Endothelial cell of umbilical vein (primary cell): ENCODE measurements at regions of chr5 and their contacts with region 1.

Region 1: DNA sequence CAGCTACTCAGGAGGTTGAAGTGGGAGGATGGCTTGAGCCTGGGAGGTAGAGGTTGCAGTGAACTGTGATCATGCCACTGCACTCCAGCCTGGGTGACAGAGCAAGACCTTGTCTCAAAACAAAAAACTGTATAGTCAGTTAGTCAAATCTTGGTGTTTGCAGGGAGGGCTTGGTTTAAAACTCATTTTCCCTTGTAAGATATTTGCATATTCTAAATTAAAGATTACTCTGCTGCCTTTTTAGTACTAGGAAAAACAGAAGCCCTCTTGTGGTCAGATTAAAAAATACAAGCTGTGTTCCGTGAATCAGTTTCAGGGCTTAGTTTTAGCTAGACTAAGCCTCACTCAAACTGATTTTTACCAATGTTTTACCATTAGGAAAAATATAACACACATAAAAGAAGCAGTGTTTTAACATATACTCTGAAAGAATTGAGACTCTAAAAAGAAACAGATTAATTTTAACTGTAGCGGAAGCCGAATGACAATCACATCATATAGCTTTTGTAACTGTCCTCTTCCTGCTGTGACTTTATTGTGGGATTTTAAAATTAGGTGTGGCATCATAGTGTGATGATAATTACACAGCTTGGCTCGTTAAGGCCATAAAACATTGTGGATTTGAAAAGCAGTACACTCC is 84.9 kb upstream of the BASP1 start:
- DNase-seq: peak; percentile 67
- H3K4me3 ChIP-seq: no peak overlapping the region
- H3K27ac ChIP-seq: no peak overlapping the region
- H3K4me1 ChIP-seq: peaks cover 23% of the 10 kb centered on the region
- H3K27me3 ChIP-seq: no peaks in the 10 kb centered on the region
- CTCF ChIP-seq: peak; percentile 26 to 27
- POLR2A ChIP-seq: no peak

Region 2: GRCh38 chr5:16934123-16934522 is 198.4 kb before region 1 on chr5:
- CTCF ChIA-PET with region 1: interaction called, 257 read pairs
- POLR2A ChIA-PET with region 1: interaction called, 7 read pairs
- dilution Hi-C with region 1: no loop called
- intact Hi-C with region 1: loop called (anchors 1 kb)
- DNase-seq: peak; percentile 86
- H3K4me3 ChIP-seq: peak overlapping the region; percentile 83 to 99 (median 97)
- H3K27ac ChIP-seq: peak overlapping the region; percentile 81
- H3K4me1 ChIP-seq: peaks cover 48% of the 10 kb centered on the region
- H3K27me3 ChIP-seq: no peaks in the 10 kb centered on the region
- CTCF ChIP-seq: peak; percentile 90 to 99
- POLR2A ChIP-seq: no peak

Region 3: GRCh38 chr5:17021602-17021932 is 111.0 kb before region 1 on chr5:
- CTCF ChIA-PET with region 1: interaction called, 16 read pairs
- POLR2A ChIA-PET with region 1: no interaction called
- dilution Hi-C with region 1: no loop called
- intact Hi-C with region 1: no loop called
- DNase-seq: no peak
- H3K4me3 ChIP-seq: no peak overlapping the region
- H3K27ac ChIP-seq: peak overlapping the region; percentile 67
- H3K4me1 ChIP-seq: peaks cover 14% of the 10 kb centered on the region
- H3K27me3 ChIP-seq: no peaks in the 10 kb centered on the region
- CTCF ChIP-seq: no peak
- POLR2A ChIP-seq: no peak

Region 4: DNA sequence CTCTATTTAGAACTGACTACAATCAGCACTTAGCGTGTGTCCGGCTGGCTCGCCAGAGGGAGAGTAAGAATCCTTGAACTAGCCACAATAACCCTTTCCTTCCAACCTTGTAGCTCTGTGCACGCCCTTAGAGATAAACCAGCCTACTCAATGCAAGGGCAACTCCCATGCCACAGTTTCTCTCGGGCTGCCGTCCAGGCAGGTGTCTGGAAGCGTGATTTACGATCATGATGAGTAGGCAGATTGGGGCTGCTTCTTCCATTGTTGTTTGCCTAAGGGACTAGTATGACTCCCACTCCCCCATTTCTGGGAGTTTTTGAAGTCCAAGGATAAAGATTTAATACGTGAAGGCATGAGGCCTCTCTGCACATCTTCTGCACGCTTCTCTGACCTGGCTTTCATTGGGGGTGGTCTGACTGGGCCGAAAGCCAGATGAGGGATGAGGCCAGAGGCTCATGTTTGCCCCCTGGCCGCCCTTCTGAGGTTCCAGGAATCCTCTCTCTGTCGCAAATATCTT is 62.5 kb before region 1 on chr5:
- CTCF ChIA-PET with region 1: interaction called, 14 read pairs
- POLR2A ChIA-PET with region 1: no interaction called
- dilution Hi-C with region 1: no loop called
- intact Hi-C with region 1: no loop called
- DNase-seq: peak; percentile 74
- H3K4me3 ChIP-seq: no peak overlapping the region
- H3K27ac ChIP-seq: no peak overlapping the region
- H3K4me1 ChIP-seq: peaks cover 14% of the 10 kb centered on the region
- H3K27me3 ChIP-seq: no peaks in the 10 kb centered on the region
- CTCF ChIP-seq: no peak
- POLR2A ChIP-seq: no peak

Region 5: DNA sequence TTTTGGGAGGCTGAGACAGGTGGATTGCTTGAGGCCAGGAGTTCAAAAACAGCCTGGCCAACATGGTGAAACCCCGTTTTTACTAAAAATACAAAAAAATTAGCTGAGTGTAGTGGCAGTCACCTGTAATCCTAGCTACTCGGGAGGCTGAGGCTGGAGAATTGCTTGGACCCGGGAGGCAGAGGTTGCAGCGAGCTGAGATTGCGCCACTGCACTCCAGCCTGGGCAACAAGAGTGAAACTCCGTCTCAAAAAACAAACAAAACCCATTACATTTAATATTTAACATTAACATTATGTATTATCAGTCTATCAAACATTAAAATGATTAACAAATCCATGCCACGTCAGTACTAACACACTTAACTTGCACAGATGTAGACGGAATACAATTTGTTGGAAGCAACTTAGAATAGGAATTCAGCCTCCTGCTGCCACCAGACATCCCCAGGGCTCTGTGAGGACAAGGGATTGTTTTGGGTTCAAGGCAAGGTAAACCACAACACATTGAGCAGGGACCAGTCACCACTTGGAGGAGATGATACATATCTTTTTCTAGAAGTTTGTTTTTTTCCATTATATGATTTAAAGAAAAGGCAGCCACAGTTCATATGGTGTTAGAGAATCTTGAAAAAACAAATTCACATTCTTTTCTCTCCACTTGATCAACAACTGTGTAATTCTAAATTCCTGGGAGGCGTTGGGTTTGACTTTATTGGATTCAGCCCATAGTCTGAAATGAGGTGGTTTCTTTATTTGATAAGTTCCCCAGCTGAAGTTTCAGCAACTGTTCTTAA is 19.2 kb before region 1 on chr5:
- CTCF ChIA-PET with region 1: interaction called, 37 read pairs
- POLR2A ChIA-PET with region 1: interaction called, 11 read pairs
- dilution Hi-C with region 1: no loop called
- intact Hi-C with region 1: loop called (anchors 1 kb)
- DNase-seq: no peak
- H3K4me3 ChIP-seq: no peak overlapping the region
- H3K27ac ChIP-seq: no peak overlapping the region
- H3K4me1 ChIP-seq: peaks cover 19% of the 10 kb centered on the region
- H3K27me3 ChIP-seq: no peaks in the 10 kb centered on the region
- CTCF ChIP-seq: no peak
- POLR2A ChIP-seq: no peak

Region 6: DNA sequence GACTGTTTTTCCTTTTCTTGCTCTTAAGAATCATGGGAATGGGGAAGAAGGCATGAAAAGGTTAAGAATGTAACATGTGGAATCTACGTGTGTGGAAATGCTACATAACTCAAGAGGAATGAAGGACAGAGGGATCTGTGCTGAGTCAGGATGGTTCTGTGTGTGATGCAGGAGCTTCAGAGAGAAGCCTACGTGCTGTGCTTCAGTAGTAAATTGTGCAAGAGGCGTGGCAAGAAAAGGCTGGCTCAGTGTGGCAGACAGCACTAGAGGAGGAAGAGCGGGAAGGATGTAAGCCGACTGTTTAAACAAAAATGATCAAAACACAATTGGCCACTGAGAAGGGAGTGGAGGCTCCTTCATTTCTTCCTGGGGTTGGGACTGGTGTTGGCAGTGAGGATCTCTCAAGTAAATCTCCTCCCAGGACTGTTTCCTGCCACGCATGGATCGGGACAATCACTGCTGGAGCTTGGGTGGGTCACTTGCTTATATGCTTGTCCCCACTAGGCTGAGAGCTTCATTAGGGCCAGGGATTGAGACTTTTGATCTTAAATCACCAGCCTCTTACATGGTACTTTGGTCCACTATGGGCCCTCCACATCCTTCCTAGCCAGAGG is 25.5 kb after region 1 on chr5:
- CTCF ChIA-PET with region 1: interaction called, 22 read pairs
- POLR2A ChIA-PET with region 1: no interaction called
- dilution Hi-C with region 1: no loop called
- intact Hi-C with region 1: no loop called
- DNase-seq: peak; percentile 69
- H3K4me3 ChIP-seq: no peak overlapping the region
- H3K27ac ChIP-seq: no peak overlapping the region
- H3K4me1 ChIP-seq: peaks cover 18% of the 10 kb centered on the region
- H3K27me3 ChIP-seq: no peaks in the 10 kb centered on the region
- CTCF ChIP-seq: no peak
- POLR2A ChIP-seq: no peak

Region 7: GRCh38 chr5:17336065-17336464 is 203.5 kb after region 1 on chr5:
- CTCF ChIA-PET with region 1: no interaction called
- POLR2A ChIA-PET with region 1: no interaction called
- dilution Hi-C with region 1: no loop called
- intact Hi-C with region 1: no loop called
- DNase-seq: no peak
- H3K4me3 ChIP-seq: no peak overlapping the region
- H3K27ac ChIP-seq: no peak overlapping the region
- H3K4me1 ChIP-seq: peaks cover 4% of the 10 kb centered on the region
- H3K27me3 ChIP-seq: peaks cover 0 to 3% of the 10 kb centered on the region in 2 experiments
- CTCF ChIP-seq: no peak
- POLR2A ChIP-seq: no peak